ENCODE measurements at regions of chr3 and their contacts with region 1.

Region 1: DNA sequence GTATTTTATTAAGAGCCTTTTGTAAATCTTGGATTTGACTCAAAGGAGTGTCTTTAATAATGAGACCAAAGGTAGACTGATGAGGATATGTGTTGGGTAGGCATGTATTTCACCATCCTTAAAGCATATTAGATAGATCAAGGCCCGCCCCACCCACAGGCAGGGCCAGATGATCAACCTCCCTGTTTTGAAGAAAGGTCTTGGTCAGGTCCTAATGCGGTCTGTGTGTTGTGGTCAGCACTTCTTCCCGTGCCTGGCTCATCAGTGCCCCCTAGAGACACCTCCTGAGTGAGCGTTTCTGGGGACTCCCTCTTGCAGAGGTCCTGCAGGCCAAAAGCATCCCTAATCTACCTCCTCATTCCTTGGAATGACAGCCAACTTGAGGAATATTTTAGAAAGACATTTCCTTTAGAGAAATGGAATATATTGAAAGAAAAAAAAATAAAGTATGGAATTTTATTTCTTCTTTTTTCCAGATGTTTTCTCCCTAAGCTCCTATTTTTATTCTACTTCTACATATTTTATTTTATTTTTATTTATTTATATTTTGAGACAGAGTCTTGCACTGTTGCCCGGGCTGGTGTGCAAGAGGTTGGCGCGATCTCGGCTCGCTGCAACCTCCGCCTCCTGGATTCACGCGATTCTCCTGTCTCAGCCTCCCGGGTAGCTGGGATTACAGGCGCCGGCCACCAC is 6.0 kb downstream of the TM4SF4 start:
- DNase-seq: no peak
- ATAC-seq: peak; percentile 40
- H3K4me3 Mint-ChIP-seq: no peak overlapping the region
- H3K27ac Mint-ChIP-seq: no peak overlapping the region
- H3K4me1 Mint-ChIP-seq: no peaks in the 10 kb centered on the region
- H3K27me3 Mint-ChIP-seq: no peaks in the 10 kb centered on the region
- CTCF ChIP-seq: no peak

Region 2: GRCh38 chr3:148839805-148840204 is 640.7 kb before region 1 on chr3:
- CTCF ChIA-PET with region 1: no interaction called
- POLR2A ChIA-PET with region 1: no interaction called
- intact Hi-C with region 1: no loop called
- DNase-seq: no peak
- ATAC-seq: no peak
- H3K4me3 Mint-ChIP-seq: no peak overlapping the region
- H3K27ac Mint-ChIP-seq: no peak overlapping the region
- H3K4me1 Mint-ChIP-seq: no peaks in the 10 kb centered on the region
- H3K27me3 Mint-ChIP-seq: no peaks in the 10 kb centered on the region
- CTCF ChIP-seq: no peak

Region 3: DNA sequence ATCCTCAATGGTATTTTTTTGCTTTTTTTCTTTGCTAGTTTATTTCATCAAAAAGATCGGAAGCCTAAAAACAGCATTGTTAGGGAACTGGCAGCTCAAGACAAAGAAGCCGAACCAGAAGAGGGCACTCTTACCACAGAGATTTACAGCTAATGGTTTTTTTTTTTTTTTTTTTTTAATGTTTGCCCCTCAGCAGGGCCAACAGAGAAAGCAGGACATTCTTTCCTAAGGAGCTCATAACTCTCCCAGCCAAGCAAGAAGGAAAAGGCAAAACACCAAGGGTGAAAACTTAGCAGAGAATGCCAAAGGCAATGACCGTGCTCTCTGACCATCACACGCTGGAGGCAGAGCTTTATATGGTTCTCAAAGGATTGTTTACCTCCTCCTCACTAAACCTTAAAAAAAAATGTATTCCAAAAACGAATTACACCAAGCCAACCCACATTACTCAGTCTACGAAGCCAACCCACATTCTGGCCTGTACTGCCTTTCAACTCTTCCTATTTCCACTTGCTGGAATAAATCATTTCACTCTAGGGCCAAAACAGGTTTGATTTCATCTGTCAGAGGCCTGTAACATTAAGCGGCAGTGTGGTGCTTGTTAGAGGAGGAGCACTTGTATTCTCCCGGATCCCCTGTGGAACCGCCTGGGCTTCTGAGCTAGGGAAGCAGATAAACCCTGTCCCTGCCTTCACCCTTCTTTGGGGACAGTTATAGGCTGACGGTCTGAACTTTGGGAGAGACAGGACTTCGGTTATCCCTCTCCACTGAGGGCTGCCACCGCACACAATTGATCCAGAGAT is 524.7 kb before region 1 on chr3:
- CTCF ChIA-PET with region 1: interaction called, 4 read pairs
- POLR2A ChIA-PET with region 1: no interaction called
- intact Hi-C with region 1: loop called (anchors 10 kb)
- DNase-seq: no peak
- ATAC-seq: no peak
- H3K4me3 Mint-ChIP-seq: no peak overlapping the region
- H3K27ac Mint-ChIP-seq: no peak overlapping the region
- H3K4me1 Mint-ChIP-seq: no peaks in the 10 kb centered on the region
- H3K27me3 Mint-ChIP-seq: peaks cover 7% of the 10 kb centered on the region
- CTCF ChIP-seq: no peak

Region 4: GRCh38 chr3:149352556-149352955 is 127.9 kb before region 1 on chr3:
- CTCF ChIA-PET with region 1: no interaction called
- POLR2A ChIA-PET with region 1: no interaction called
- intact Hi-C with region 1: loop called (anchors 1 kb)
- DNase-seq: no peak
- ATAC-seq: peak; percentile 65
- H3K4me3 Mint-ChIP-seq: no peak overlapping the region
- H3K27ac Mint-ChIP-seq: no peak overlapping the region
- H3K4me1 Mint-ChIP-seq: no peaks in the 10 kb centered on the region
- H3K27me3 Mint-ChIP-seq: peaks cover 16% of the 10 kb centered on the region
- CTCF ChIP-seq: no peak

Region 5: GRCh38 chr3:149393345-149394160 is 86.9 kb before region 1 on chr3:
- CTCF ChIA-PET with region 1: no interaction called
- POLR2A ChIA-PET with region 1: no interaction called
- intact Hi-C with region 1: loop called (anchors 2 kb)
- DNase-seq: no peak
- ATAC-seq: no peak
- H3K4me3 Mint-ChIP-seq: no peak overlapping the region
- H3K27ac Mint-ChIP-seq: no peak overlapping the region
- H3K4me1 Mint-ChIP-seq: no peaks in the 10 kb centered on the region
- H3K27me3 Mint-ChIP-seq: peaks cover 2% of the 10 kb centered on the region
- CTCF ChIP-seq: no peak

Region 6: GRCh38 chr3:149585401-149585726 is 104.9 kb after region 1 on chr3:
- CTCF ChIA-PET with region 1: no interaction called
- POLR2A ChIA-PET with region 1: no interaction called
- intact Hi-C with region 1: no loop called
- DNase-seq: no peak
- ATAC-seq: no peak
- H3K4me3 Mint-ChIP-seq: no peak overlapping the region
- H3K27ac Mint-ChIP-seq: no peak overlapping the region
- H3K4me1 Mint-ChIP-seq: peaks cover 2% of the 10 kb centered on the region
- H3K27me3 Mint-ChIP-seq: peaks cover 7% of the 10 kb centered on the region
- CTCF ChIP-seq: no peak

Region 7: DNA sequence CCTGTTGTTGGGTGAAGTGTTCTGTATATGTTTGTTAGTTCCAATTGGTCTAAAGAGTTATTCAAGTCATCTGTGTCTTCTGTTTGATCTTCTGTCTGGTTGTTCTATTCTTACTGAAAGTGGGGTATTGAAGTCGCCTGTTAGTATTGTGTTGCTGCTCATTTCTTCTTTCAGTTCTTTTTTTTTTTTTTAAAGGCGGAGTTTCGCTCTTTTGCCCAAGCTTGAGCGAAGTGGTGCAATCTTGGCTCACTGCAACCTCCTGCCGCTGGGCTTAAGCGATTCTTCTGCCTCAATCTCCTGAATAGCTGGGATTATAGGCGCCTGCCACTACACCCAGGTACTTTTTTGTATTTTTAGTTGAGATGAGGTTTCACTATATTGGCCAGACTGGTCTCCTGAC is 466.8 kb after region 1 on chr3:
- CTCF ChIA-PET with region 1: no interaction called
- POLR2A ChIA-PET with region 1: no interaction called
- intact Hi-C with region 1: no loop called
- DNase-seq: no peak
- ATAC-seq: no peak
- H3K4me3 Mint-ChIP-seq: no peak overlapping the region
- H3K27ac Mint-ChIP-seq: no peak overlapping the region
- H3K4me1 Mint-ChIP-seq: peaks cover 18% of the 10 kb centered on the region
- H3K27me3 Mint-ChIP-seq: no peaks in the 10 kb centered on the region
- CTCF ChIP-seq: no peak